Right ventricle myocardium inferior (tissue), 1 donor: ENCODE measurements at regions of chr19 and their contacts with region 1.

Region 1: GRCh38 chr19:43901395-43902390 is 33.4 kb downstream of the ZNF45 start:
- DNase-seq: peak; percentile 87
- ATAC-seq: peak; percentile 99

Region 2: DNA sequence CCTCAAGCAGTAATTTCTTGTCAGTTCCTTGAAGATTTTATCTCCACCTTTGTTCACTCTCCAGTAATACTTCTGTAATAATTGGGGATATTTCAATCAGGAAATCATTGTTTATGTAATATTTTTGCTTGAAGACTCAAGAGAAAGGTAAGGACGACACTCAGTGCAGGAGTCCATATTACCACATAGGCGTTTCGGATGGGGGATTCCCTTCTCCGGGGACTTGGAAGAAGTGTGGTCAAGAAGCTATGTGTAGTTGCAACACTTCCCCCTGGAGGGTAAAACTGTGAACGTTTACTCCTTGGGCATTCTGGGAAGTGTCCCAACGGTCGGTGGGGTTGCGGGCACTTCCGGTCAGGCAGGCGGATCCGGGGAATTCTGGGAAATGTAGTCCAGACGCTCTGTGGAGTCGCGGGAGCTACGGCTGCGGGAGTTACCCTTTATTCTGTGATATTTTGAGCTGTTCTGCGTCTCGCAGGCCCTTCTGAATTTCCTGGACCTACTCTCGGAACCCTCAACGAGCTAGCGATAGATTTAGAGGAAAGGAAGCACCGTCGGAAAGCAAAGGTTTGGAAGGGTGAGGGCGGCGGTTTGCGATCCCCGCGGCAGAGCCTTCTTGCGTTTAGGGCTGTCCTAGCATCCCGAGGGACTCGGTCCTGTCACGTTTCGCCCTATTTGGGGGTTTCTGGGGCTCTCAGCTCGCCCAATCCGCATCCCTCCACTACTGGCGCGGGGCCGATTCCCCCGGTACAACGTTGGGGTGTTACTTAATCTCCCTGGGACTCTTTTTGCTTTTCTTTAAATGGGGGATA is 49.3 kb after region 1 on chr19 and contains the start of gene ZNF221:
- intact Hi-C with region 1: loop called (anchors 1 kb)
- DNase-seq: peak; percentile 90
- ATAC-seq: peak; percentile 99
- total RNA-seq, gene ZNF221: 3.9 TPM

Region 3: DNA sequence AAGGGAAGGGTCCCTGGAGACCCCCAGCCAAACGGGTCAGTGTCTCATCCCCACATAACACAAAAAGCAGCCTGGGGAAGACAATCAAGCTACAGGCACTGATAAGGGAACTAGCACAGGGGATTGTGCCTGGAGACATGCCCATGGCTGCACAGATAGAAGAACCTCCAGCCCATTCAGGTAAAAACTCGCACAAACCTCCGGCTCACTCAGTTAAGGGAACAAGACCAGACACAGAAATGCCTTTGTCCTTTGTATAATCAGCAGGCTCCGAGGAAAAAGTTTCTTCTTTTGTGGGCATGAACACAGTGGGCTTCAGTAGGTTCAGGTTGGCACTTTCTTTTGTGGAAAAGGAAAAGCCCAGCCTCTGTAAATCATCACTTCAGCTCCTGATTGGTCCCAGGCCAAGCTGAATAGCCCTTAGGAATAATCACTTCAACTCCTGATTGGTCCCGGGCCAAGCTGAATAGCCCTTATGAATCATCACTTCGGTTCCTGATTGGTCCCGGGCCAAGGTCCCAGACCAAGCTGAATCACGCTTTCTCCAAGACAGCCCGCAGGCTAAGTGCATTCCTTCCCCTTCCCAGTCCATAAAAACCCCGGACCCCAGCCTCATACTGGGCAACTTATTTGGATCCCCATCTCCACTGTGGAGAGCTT is 96.1 kb after region 1 on chr19:
- intact Hi-C with region 1: no loop called
- DNase-seq: no peak
- ATAC-seq: no peak